Transverse colon (tissue), 4 donors: ENCODE measurements at regions of chr3 and their contacts with region 1.

Region 1: GRCh38 chr3:1294566-1294965 is 201.7 kb downstream of the CNTN6 start:
- DNase-seq: no peak
- H3K4me3 ChIP-seq: no peak overlapping the region
- H3K27ac ChIP-seq: no peak overlapping the region
- H3K4me1 ChIP-seq: no peaks in the 10 kb centered on the region
- H3K27me3 ChIP-seq: no peaks in the 10 kb centered on the region
- CTCF ChIP-seq: no peak
- EP300 ChIP-seq: no peak
- POLR2A ChIP-seq: no peak

Region 2: GRCh38 chr3:1235526-1236120 is 58.9 kb before region 1 on chr3:
- in situ Hi-C with region 1: no loop called
- intact Hi-C with region 1: no loop called
- DNase-seq: no peak
- H3K4me3 ChIP-seq: no peak overlapping the region
- H3K27ac ChIP-seq: no peak overlapping the region
- H3K4me1 ChIP-seq: no peaks in the 10 kb centered on the region
- H3K27me3 ChIP-seq: no peaks in the 10 kb centered on the region
- CTCF ChIP-seq: no peak
- EP300 ChIP-seq: no peak
- POLR2A ChIP-seq: no peak

Region 3: GRCh38 chr3:1404270-1404962 is 109.8 kb after region 1 on chr3:
- in situ Hi-C with region 1: no loop called
- intact Hi-C with region 1: loop called (anchors 5 kb)
- DNase-seq: no peak
- H3K4me3 ChIP-seq: no peak overlapping the region
- H3K27ac ChIP-seq: no peak overlapping the region
- H3K4me1 ChIP-seq: no peaks in the 10 kb centered on the region
- H3K27me3 ChIP-seq: no peaks in the 10 kb centered on the region
- CTCF ChIP-seq: no peak
- EP300 ChIP-seq: no peak
- POLR2A ChIP-seq: no peak